ENCODE measurements at regions of chr5 and their contacts with region 1.

Region 1: DNA sequence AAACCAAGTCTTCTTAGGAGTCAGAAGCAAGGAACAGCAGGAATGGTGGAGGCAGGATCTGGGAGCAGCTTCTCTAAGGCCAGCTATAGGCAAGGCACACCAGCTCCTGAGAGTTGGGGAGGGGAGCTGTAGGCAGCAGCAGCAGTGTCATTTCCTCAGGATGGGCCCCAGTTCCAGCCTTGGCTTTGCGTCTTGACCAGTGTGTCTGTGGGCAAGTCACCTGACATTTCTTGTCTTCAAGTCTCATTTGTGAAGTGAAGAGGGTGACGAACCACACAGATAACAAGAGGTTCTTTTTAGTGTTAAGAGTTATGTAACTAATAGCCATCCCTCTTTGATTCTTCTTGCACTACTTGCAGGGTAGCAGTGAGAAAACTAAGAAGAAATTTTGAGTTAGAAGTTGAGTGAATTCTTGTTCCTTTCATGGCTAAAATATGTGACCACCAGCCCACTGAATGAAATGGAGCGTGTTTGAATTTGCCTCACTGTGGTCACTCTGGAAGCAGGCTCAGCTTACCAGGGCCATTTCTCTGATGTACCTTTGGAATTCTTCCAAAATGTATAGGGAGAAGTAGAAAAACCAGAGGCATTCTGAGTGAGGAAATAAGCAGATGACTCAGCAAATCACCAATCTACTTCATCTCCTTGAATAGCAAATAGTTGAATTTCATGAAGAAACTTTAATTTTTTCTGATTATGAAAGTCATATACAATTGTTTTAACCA is 42.4 kb downstream of the RHOBTB3 start:
- DNase-seq: no peak
- ATAC-seq: peak in 3 of 4 donors; percentile 14 to 49 (median 19)
- H3K4me3 ChIP-seq: no peak overlapping the region
- H3K27ac ChIP-seq: peak overlapping the region in 3 of 12 donors; percentile 11 to 37 (median 24)
- H3K4me1 ChIP-seq: peaks cover 0 to 30% (median 13%) of the 10 kb centered on the region in 12 donors
- H3K27me3 ChIP-seq: no peaks in the 10 kb centered on the region
- CTCF ChIP-seq: no peak
- POLR2A ChIP-seq: no peak

Region 2: GRCh38 chr5:95664204-95664786 is 109.2 kb before region 1 on chr5:
- intact Hi-C with region 1: loop called in 4 of 10 experiments (anchors 5 to 10 kb)
- DNase-seq: no peak
- ATAC-seq: peak in 2 of 4 donors; percentile 39 to 45
- H3K4me3 ChIP-seq: no peak overlapping the region
- H3K27ac ChIP-seq: peak overlapping the region in 3 of 12 donors; percentile 26 to 37 (median 34)
- H3K4me1 ChIP-seq: peaks cover 0 to 25% (median 9%) of the 10 kb centered on the region in 12 donors
- H3K27me3 ChIP-seq: no peaks in the 10 kb centered on the region
- CTCF ChIP-seq: peak; percentile 65 to 89 (median 83)
- POLR2A ChIP-seq: no peak

Region 3: GRCh38 chr5:95669540-95669939 is 104.0 kb before region 1 on chr5:
- intact Hi-C with region 1: loop called in 5 of 10 experiments (anchors 5 to 10 kb)
- DNase-seq: peak; percentile 63 to 84 (median 78)
- ATAC-seq: peak; percentile 92 to 98 (median 98)
- H3K4me3 ChIP-seq: no peak overlapping the region
- H3K27ac ChIP-seq: peak overlapping the region in 11 of 12 donors; percentile 29 to 81 (median 53)
- H3K4me1 ChIP-seq: peaks cover 0 to 38% (median 18%) of the 10 kb centered on the region in 12 donors
- H3K27me3 ChIP-seq: no peaks in the 10 kb centered on the region
- CTCF ChIP-seq: no peak
- POLR2A ChIP-seq: no peak

Region 4: GRCh38 chr5:95712347-95712958 is 61.0 kb before region 1 on chr5:
- intact Hi-C with region 1: loop called in 1 of 10 experiments (anchors 5 kb)
- DNase-seq: no peak
- ATAC-seq: peak in 2 of 4 donors; percentile 63 to 66
- H3K4me3 ChIP-seq: no peak overlapping the region
- H3K27ac ChIP-seq: no peak overlapping the region
- H3K4me1 ChIP-seq: peaks cover 0 to 18% (median 4%) of the 10 kb centered on the region in 12 donors
- H3K27me3 ChIP-seq: no peaks in the 10 kb centered on the region
- CTCF ChIP-seq: no peak
- POLR2A ChIP-seq: no peak

Region 5: DNA sequence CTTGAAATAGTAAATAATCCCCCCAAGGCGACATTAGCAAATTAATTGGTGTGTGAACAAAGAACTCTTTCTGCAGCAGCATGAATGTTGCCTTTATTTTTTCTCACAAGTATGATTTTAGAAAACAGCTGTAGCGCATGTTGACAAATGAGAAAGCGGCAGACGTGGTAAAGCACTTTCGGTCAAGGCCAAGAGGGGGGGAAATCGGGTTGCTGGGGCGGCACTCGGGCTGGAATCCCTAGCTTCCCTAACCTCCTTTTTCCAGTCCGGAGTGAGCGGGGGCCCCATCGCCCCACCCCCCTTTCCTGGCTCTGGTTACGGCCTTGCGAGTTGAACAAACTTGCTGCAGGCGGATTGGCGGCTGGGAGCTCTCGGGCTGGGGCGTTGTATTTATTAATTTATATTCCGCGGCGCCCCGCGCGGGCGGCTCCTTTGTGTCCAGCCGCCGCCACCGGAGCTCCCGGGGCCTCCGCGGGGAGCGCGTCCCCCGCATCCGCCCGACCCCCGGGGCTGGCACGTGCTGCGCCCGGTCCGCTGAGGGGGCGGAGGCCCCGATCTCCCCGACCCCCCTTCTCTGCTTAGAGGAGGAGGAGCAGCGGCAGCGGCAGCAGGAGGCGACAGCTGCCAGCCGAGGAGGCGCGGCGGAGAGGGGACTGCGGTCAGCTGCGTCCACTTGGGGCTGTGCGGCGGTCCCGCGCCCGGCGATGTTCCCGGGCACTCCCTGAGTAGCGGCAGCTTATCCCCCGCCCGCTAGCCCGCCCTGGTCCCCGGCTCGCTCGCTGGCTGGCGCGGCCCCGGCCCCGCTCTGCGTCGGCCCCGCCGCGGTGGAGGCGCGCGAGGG is 42.5 kb before region 1 on chr5 and contains the start of gene RHOBTB3:
- intact Hi-C with region 1: loop called in 4 of 10 experiments (anchors 5 kb)
- DNase-seq: peak; percentile 90 to 95 (median 92)
- ATAC-seq: peak; percentile 50 to 88 (median 79)
- H3K4me3 ChIP-seq: peak within 1 kb of the TSS; percentile 62 to 96 (median 76)
- H3K27ac ChIP-seq: peak within 1 kb of the TSS; percentile 84 to 98 (median 94)
- H3K4me1 ChIP-seq: peaks cover 0 to 71% (median 40%) of the 10 kb centered on the region in 12 donors
- H3K27me3 ChIP-seq: no peaks in the 10 kb centered on the region
- CTCF ChIP-seq: peak in 3 of 12 donors; percentile 17 to 22 (median 20)
- POLR2A ChIP-seq: peak in 1 of 2 donors; percentile 74
- total RNA-seq, gene RHOBTB3: 62.9 to 116 (median 86.7) TPM

Region 6: GRCh38 chr5:95822542-95823181 is 49.2 kb after region 1 on chr5 and contains the start of gene GLRX:
- intact Hi-C with region 1: no loop called
- DNase-seq: peak; percentile 72 to 82 (median 76)
- ATAC-seq: peak; percentile 67 to 77 (median 72)
- H3K4me3 ChIP-seq: peak within 1 kb of the TSS; percentile 44 to 93 (median 82)
- H3K27ac ChIP-seq: peak within 1 kb of the TSS; percentile 31 to 95 (median 88)
- H3K4me1 ChIP-seq: peaks cover 10 to 81% (median 58%) of the 10 kb centered on the region in 12 donors
- H3K27me3 ChIP-seq: no peaks in the 10 kb centered on the region
- CTCF ChIP-seq: no peak
- POLR2A ChIP-seq: peak in 1 of 2 donors; percentile 58
- total RNA-seq, gene GLRX: 69.7 to 293 (median 114) TPM

Region 7: DNA sequence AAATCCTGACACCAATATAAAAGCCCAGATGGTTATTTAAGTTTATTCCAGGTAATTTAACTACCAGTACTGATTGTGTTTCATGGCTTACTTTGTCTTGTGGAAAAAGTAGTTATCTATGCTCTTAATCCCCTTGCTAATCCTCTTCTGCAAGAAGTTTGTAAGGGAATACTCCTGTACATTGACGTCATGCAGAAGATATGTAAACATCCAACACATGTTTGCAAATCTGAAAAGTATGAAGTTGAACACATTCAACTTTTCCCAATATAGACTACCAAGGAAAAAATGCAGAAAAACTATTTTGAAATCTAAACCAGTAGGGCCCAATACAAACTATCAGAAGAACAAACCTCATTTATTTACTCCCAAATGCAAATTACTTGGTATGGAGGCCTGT is 244.5 kb after region 1 on chr5:
- intact Hi-C with region 1: no loop called
- DNase-seq: no peak
- ATAC-seq: no peak
- H3K4me3 ChIP-seq: no peak overlapping the region
- H3K27ac ChIP-seq: no peak overlapping the region
- H3K4me1 ChIP-seq: peaks cover 0 to 1% (median 0%) of the 10 kb centered on the region in 12 donors
- H3K27me3 ChIP-seq: no peaks in the 10 kb centered on the region
- CTCF ChIP-seq: no peak
- POLR2A ChIP-seq: no peak

Measured in heart left ventricle (tissue), 16 donors.